Activated CD4-positive, alpha-beta T cell treated with anti-CD3 and anti-CD28 coated beads, Interleukin-2, amount 10 ng/mL, durations not matched to agents 24 days and 14 days (primary cell): ENCODE measurements at regions of chr3 and their contacts with region 1.

Region 1: GRCh38 chr3:189529468-189529867 is 101.7 kb upstream of the TP63 start:
- DNase-seq: no peak
- H3K4me3 Mint-ChIP-seq: no peak overlapping the region
- H3K27ac Mint-ChIP-seq: peak overlapping the region; percentile 69
- H3K4me1 Mint-ChIP-seq: peaks cover 18% of the 10 kb centered on the region
- H3K27me3 Mint-ChIP-seq: no peaks in the 10 kb centered on the region

Region 2: DNA sequence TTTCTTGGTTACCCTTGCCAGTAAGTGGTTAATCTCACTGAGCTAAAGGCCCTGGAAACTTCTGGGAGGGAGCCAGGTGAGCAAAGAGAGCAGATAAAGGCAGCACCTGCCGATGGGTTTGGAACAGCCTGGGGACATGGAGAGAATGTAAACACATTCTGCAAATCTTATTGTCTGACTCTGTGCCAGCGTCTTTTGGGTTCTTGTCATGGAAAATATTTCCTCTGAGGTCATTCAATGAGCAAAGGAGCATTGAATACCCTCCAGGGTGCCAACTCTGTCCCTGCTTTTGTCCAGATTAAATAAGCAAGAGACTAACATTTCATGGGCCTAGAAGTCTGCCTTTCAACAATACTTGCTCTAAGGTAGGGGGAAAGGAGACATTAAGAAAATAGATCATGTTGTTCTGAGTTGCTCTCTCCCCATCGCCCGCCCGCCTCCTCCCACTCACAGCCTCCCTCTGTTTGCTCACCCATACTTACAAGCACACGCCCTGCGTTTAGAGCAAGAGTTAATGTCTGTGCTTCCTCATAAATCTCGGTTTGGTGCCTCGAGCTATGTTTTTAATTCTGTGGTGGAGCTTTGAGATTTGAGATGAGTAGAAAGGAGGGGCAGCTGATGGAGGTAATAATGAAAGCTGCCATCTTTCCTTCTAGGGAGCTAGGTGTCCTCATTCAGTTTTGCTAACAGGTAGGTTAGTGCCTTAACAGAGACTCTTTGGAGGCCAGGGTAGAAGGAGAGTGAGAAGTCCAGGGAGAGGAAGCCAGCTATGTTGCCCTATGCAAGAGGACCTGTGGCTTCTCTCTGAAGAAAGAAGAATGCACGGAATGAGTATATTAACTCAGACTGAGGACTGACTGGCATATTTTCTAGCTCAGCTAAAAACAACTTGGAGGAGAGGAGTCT is 224.8 kb before region 1 on chr3:
- intact Hi-C with region 1: loop called (anchors 1 kb)
- DNase-seq: peak; percentile 65
- H3K4me3 Mint-ChIP-seq: peak overlapping the region; percentile 63
- H3K27ac Mint-ChIP-seq: peak overlapping the region; percentile 91
- H3K4me1 Mint-ChIP-seq: peaks cover 58% of the 10 kb centered on the region
- H3K27me3 Mint-ChIP-seq: no peaks in the 10 kb centered on the region

Region 3: GRCh38 chr3:189355481-189356201 is 173.8 kb before region 1 on chr3:
- intact Hi-C with region 1: no loop called
- DNase-seq: peak; percentile 81
- H3K4me3 Mint-ChIP-seq: peak overlapping the region; percentile 65
- H3K27ac Mint-ChIP-seq: peak overlapping the region; percentile 85
- H3K4me1 Mint-ChIP-seq: peaks cover 26% of the 10 kb centered on the region
- H3K27me3 Mint-ChIP-seq: no peaks in the 10 kb centered on the region

Region 4: GRCh38 chr3:189557824-189558223 is 28.4 kb after region 1 on chr3:
- intact Hi-C with region 1: no loop called
- DNase-seq: no peak
- H3K4me3 Mint-ChIP-seq: no peak overlapping the region
- H3K27ac Mint-ChIP-seq: no peak overlapping the region
- H3K4me1 Mint-ChIP-seq: peaks cover 2% of the 10 kb centered on the region
- H3K27me3 Mint-ChIP-seq: no peaks in the 10 kb centered on the region

Region 5: DNA sequence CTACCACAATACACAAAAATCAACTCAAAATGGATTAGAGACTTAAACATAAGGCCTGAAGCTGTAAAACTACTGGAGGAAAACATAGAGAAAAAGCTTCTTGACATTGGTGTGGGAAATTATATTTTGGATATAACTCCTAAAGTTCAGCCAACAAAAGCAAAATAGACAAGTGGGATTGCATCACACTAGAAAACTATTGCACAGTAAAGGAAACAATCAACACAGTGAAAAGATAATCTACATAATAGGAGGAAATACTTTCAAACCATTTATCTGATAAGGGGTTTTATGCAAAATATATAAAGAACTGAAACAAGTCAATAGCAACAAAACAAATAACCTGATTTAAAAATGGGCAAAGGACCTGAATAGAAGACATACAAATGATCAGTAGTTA is 64.1 kb after region 1 on chr3:
- intact Hi-C with region 1: no loop called
- DNase-seq: no peak
- H3K4me3 Mint-ChIP-seq: no peak overlapping the region
- H3K27ac Mint-ChIP-seq: no peak overlapping the region
- H3K4me1 Mint-ChIP-seq: no peaks in the 10 kb centered on the region
- H3K27me3 Mint-ChIP-seq: no peaks in the 10 kb centered on the region